Activated CD4-positive, alpha-beta memory T cell treated with anti-CD3 and anti-CD28 coated beads, Interleukin-2, amount 10 ng/mL, durations not matched to agents 7 days and 5 days (primary cell): ENCODE measurements at regions of chr7 and their contacts with region 1.

Region 1: DNA sequence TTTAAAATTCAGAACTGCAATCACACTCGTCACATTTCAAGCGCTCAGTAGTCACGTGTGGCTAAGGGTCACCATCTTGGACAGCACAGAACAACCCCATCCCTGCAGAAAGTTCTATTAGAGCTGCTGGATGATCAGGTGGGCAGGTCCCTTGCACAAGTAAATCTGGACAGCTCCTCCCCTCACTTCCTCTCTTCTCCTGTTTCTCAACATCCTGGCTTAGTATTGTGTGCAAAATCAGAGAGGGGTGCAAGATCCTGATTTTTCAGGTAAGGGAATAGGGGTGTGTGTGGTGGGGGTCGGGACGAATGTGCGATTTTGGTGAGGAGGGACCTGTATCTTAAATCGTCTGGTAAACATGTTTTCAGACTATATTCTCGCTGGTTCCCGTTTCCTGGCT is at the start of gene GIMAP4:
- DNase-seq: peak; percentile 39
- H3K4me3 Mint-ChIP-seq: peak within 1 kb of the TSS; percentile 95
- H3K27ac Mint-ChIP-seq: peak within 1 kb of the TSS; percentile 93
- H3K4me1 Mint-ChIP-seq: peaks cover 70% of the 10 kb centered on the region
- H3K27me3 Mint-ChIP-seq: no peaks in the 10 kb centered on the region
- total RNA-seq, gene GIMAP4: 277 to 282 TPM

Region 2: GRCh38 chr7:150356265-150356897 is 210.8 kb before region 1 on chr7:
- CTCF ChIA-PET with region 1: no interaction called
- POLR2A ChIA-PET with region 1: no interaction called
- DNase-seq: no peak
- H3K4me3 Mint-ChIP-seq: no peak overlapping the region
- H3K27ac Mint-ChIP-seq: peak overlapping the region; percentile 13
- H3K4me1 Mint-ChIP-seq: peaks cover 43% of the 10 kb centered on the region
- H3K27me3 Mint-ChIP-seq: no peaks in the 10 kb centered on the region

Region 3: DNA sequence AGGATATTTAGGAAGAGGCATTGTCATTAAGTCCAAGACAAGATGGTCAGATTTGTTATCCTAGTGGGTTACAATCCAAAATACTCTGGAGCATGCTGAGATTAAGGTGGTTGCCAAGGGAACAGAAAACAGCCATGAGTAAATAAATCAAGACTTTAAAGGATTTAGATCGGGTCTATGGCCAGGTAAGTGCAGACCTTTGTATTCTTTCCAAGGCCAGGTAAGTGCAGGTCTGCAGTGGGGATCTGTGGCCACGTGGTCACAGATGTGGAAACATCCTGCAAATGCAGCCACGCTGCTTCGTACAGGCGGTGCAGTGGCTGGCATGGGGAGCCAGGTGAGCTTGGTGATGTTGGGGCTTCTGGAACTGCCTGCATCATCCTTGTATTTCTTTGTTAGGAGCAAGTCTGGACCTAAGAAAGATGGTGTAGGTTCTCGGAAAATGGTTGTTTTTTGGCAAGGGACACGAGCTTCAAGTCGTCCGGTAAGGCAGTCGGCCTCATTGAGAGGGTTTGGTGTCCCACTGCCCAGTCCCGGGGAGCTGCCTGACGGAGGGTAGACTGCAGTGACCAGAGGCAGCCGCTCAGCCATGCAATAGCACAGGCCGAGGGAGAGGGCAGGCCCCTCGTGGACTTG is 166.3 kb before region 1 on chr7:
- CTCF ChIA-PET with region 1: no interaction called
- POLR2A ChIA-PET with region 1: no interaction called
- DNase-seq: no peak
- H3K4me3 Mint-ChIP-seq: no peak overlapping the region
- H3K27ac Mint-ChIP-seq: no peak overlapping the region
- H3K4me1 Mint-ChIP-seq: peaks cover 24% of the 10 kb centered on the region
- H3K27me3 Mint-ChIP-seq: no peaks in the 10 kb centered on the region

Region 4: GRCh38 chr7:150514748-150515222 is 52.4 kb before region 1 on chr7 and contains the start of gene GIMAP7:
- CTCF ChIA-PET with region 1: interaction called, 7 read pairs
- POLR2A ChIA-PET with region 1: interaction called, 68 read pairs
- DNase-seq: peak; percentile 77
- H3K4me3 Mint-ChIP-seq: peak within 1 kb of the TSS; percentile 100
- H3K27ac Mint-ChIP-seq: peak within 1 kb of the TSS; percentile 100
- H3K4me1 Mint-ChIP-seq: peaks cover 55% of the 10 kb centered on the region
- H3K27me3 Mint-ChIP-seq: no peaks in the 10 kb centered on the region
- total RNA-seq, gene GIMAP7: 169 to 171 TPM

Region 5: GRCh38 chr7:150580638-150581394 is 13.6 kb after region 1 on chr7:
- CTCF ChIA-PET with region 1: no interaction called
- POLR2A ChIA-PET with region 1: interaction called, 13 read pairs
- DNase-seq: no peak
- H3K4me3 Mint-ChIP-seq: no peak overlapping the region
- H3K27ac Mint-ChIP-seq: peak overlapping the region; percentile 24
- H3K4me1 Mint-ChIP-seq: peaks cover 44% of the 10 kb centered on the region
- H3K27me3 Mint-ChIP-seq: no peaks in the 10 kb centered on the region

Region 6: DNA sequence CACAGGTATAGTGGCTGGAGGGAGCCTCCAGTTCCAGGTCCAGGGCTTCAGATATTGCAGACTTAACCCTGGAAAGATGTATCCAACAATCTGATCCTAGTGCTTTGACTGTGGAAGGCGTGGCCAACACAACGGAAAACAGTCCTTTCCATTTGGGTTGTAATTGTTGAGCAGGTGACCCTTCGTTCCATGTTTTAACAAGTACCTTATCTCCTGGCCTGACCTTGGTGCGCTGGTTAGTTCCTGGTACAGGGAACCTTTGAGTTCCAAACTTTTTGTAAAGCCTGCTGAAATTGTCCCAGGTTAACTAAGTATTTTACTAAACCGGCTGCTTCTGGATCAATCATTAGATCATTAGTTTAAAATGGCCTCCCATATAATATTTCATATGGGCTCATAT is 88.9 kb after region 1 on chr7:
- CTCF ChIA-PET with region 1: no interaction called
- POLR2A ChIA-PET with region 1: no interaction called
- DNase-seq: no peak
- H3K4me3 Mint-ChIP-seq: no peak overlapping the region
- H3K27ac Mint-ChIP-seq: no peak overlapping the region
- H3K4me1 Mint-ChIP-seq: peaks cover 17% of the 10 kb centered on the region
- H3K27me3 Mint-ChIP-seq: no peaks in the 10 kb centered on the region

Region 7: DNA sequence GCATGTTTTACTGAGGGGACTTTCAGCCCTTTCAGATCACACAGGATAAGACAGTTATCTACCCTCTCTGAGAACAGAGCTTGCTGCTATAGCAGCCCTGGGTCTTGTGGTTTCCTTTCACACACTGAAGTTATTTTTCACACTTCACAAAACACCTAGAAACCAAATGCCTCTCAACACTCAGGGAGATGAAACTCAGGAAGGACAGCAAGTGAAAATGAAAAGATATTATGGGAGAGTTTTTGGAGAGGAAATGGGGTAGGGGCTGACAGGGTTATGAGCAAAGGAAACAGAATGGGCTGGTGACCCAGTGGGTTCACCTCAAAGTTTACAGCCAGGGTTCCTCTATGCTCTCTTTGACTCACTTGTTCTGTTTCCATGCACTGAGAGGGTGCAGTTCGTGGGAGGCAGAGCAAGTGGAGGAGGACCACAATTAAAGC is 101.3 kb after region 1 on chr7:
- CTCF ChIA-PET with region 1: no interaction called
- POLR2A ChIA-PET with region 1: interaction called, 14 read pairs
- DNase-seq: peak; percentile 75
- H3K4me3 Mint-ChIP-seq: peak overlapping the region; percentile 41
- H3K27ac Mint-ChIP-seq: peak overlapping the region; percentile 95
- H3K4me1 Mint-ChIP-seq: peaks cover 84% of the 10 kb centered on the region
- H3K27me3 Mint-ChIP-seq: no peaks in the 10 kb centered on the region

Region 8: GRCh38 chr7:150737265-150738055 is 170.3 kb after region 1 on chr7 and contains the start of gene GIMAP5:
- CTCF ChIA-PET with region 1: interaction called, 6 read pairs
- POLR2A ChIA-PET with region 1: interaction called, 42 read pairs
- DNase-seq: peak; percentile 65
- H3K4me3 Mint-ChIP-seq: peak within 1 kb of the TSS; percentile 99
- H3K27ac Mint-ChIP-seq: peak within 1 kb of the TSS; percentile 94
- H3K4me1 Mint-ChIP-seq: peaks cover 80% of the 10 kb centered on the region
- H3K27me3 Mint-ChIP-seq: no peaks in the 10 kb centered on the region
- total RNA-seq, gene GIMAP5: 83.9 to 84.3 TPM